Activated naive CD4-positive, alpha-beta T cell treated with anti-CD3 and anti-CD28 coated beads for 36 hours (primary cell): ENCODE measurements at regions of chr5 and their contacts with region 1.

Region 1: DNA sequence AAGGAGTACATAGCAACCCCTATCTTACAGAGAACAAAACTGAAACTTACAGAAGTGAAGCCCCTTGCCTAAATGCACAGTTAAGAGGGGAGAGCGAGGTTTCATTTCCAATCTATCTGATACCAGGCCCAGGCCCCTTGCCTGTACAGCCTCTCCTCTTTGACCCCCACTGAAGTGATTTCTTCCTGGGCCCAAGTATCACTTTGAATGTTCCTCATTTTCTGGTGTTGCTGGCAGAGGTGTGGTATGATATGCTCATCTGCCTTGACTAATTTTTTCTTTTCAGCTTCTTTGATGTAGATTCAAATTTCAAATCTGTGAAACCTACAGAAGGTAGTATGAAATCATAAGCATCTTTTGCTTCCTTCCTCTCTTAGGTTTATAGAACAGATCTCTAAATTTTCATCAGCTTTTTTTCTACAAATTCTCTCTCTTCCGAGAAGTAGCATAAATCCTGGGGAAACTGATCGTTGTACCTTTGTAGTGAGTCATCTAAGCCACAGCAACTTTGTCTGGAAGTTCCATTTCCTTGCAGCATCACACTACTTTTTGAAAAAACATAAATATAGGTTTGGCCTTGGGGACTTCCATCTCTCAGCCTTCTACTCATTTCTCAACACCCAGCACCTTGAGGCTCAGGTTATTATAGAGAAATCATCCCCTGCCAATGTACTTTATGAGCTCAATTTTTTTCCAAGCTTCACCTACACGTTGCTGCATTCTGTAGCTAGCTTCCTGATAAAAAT is 402.4 kb upstream of the PTGER4 start:
- DNase-seq: peak; percentile 67
- H3K4me3 Mint-ChIP-seq: no peak overlapping the region
- H3K27ac Mint-ChIP-seq: peak overlapping the region; percentile 95
- H3K4me1 Mint-ChIP-seq: peaks cover 73% of the 10 kb centered on the region
- H3K27me3 Mint-ChIP-seq: no peaks in the 10 kb centered on the region

Region 2: DNA sequence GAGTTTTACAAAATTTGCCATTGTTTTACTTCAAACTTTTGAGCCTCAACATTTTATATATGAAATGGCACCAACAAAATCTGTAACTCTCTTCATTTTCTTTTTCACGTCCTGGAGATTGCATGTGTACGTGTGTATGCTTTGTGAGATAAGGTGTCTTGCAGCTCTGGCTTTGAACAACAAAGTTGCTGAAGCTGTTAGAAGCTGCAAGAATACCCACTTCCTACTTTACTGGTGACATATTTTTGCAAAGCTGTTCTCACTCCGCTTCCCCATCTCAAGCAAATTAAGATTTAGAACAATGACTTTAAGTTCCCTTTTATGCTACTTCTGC is 1099.7 kb before region 1 on chr5:
- CTCF ChIA-PET with region 1: no interaction called
- intact Hi-C with region 1: loop called (anchors 10 kb)
- DNase-seq: no peak
- H3K4me3 Mint-ChIP-seq: peak overlapping the region; percentile 75
- H3K27ac Mint-ChIP-seq: peak overlapping the region; percentile 92
- H3K4me1 Mint-ChIP-seq: peaks cover 95% of the 10 kb centered on the region
- H3K27me3 Mint-ChIP-seq: no peaks in the 10 kb centered on the region

Region 3: GRCh38 chr5:39948867-39949468 is 328.4 kb before region 1 on chr5:
- CTCF ChIA-PET with region 1: interaction called, 3 read pairs
- intact Hi-C with region 1: loop called (anchors 2 kb)
- DNase-seq: peak; percentile 79
- H3K4me3 Mint-ChIP-seq: no peak overlapping the region
- H3K27ac Mint-ChIP-seq: no peak overlapping the region
- H3K4me1 Mint-ChIP-seq: peaks cover 5% of the 10 kb centered on the region
- H3K27me3 Mint-ChIP-seq: no peaks in the 10 kb centered on the region

Region 4: GRCh38 chr5:40258222-40258621 is 19.1 kb before region 1 on chr5:
- CTCF ChIA-PET with region 1: interaction called, 3 read pairs
- intact Hi-C with region 1: loop called (anchors 1 kb)
- DNase-seq: peak; percentile 27
- H3K4me3 Mint-ChIP-seq: no peak overlapping the region
- H3K27ac Mint-ChIP-seq: no peak overlapping the region
- H3K4me1 Mint-ChIP-seq: peaks cover 6% of the 10 kb centered on the region
- H3K27me3 Mint-ChIP-seq: no peaks in the 10 kb centered on the region

Region 5: DNA sequence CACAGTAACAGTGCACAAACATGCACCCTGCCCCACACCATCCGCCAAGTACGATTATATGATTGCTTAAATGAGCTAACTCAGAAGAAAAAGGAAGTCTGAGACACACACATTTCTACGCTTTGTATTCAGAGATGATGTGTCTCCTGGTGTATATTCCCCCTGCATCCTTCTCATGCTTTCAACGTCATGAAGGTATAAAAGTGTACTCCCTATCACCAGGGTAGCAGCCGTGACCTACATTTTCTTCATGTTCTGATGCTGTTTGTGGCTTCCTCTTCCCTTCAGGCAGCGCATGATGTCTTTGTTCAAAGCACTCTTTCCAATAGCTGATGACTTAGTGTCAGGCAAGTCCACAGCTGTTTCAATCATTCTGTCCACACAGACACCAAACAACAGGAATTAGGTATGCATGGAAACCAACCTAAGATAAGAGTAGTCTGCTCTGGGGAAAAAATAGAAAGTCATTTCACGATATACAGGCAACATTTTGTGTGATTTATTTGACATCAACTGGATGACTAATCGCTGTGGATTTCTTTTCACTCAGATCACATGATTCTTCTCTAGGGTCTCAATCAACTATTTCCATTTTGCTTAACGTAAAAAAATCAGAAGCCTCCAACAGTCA is 133.0 kb after region 1 on chr5:
- CTCF ChIA-PET with region 1: interaction called, 5 read pairs
- intact Hi-C with region 1: loop called (anchors 1 kb)
- DNase-seq: peak; percentile 88
- H3K4me3 Mint-ChIP-seq: peak overlapping the region; percentile 58
- H3K27ac Mint-ChIP-seq: peak overlapping the region; percentile 98
- H3K4me1 Mint-ChIP-seq: peaks cover 64% of the 10 kb centered on the region
- H3K27me3 Mint-ChIP-seq: no peaks in the 10 kb centered on the region

Region 6: DNA sequence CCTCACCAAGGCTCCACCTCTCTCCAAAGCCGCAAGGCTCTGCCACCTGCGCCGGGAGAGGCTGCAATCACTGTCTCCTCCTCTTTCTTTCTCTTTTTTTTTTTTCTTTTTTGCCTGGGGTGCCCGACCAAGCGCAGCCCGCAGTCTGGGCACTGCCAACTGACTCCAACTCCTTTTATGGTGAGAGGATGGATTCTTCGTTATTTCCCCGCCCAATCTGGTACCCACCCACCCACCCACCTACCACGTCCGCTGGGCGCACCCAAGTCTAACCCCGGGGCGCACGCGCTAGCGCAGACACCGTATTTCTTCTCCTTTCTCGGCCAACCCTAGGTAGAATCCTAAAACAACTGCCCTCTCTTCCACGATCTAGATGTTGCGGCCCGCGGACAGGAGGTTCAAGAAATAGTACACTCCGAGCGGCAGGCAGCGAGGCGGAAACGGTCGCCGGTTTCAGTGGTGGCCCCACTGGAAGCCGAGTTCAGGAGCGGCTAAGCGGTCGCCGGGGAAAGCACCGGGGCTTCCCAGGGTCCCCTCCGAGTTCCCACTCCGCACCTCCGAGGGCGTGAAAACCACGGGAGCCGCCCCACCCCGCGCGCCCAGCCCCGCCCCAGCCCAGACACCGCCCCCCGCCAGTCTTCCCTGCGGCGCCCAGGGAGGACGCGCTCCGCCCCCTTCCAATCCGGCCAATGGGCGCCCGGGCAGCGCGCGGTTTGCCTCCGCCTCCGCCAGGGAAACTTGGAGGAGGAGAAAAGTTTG is 402.0 kb after region 1 on chr5:
- CTCF ChIA-PET with region 1: interaction called, 4 read pairs
- intact Hi-C with region 1: loop called (anchors 1 kb)
- DNase-seq: peak; percentile 95
- H3K4me3 Mint-ChIP-seq: peak overlapping the region; percentile 89
- H3K27ac Mint-ChIP-seq: peak overlapping the region; percentile 99
- H3K4me1 Mint-ChIP-seq: peaks cover 41% of the 10 kb centered on the region
- H3K27me3 Mint-ChIP-seq: no peaks in the 10 kb centered on the region

Region 7: DNA sequence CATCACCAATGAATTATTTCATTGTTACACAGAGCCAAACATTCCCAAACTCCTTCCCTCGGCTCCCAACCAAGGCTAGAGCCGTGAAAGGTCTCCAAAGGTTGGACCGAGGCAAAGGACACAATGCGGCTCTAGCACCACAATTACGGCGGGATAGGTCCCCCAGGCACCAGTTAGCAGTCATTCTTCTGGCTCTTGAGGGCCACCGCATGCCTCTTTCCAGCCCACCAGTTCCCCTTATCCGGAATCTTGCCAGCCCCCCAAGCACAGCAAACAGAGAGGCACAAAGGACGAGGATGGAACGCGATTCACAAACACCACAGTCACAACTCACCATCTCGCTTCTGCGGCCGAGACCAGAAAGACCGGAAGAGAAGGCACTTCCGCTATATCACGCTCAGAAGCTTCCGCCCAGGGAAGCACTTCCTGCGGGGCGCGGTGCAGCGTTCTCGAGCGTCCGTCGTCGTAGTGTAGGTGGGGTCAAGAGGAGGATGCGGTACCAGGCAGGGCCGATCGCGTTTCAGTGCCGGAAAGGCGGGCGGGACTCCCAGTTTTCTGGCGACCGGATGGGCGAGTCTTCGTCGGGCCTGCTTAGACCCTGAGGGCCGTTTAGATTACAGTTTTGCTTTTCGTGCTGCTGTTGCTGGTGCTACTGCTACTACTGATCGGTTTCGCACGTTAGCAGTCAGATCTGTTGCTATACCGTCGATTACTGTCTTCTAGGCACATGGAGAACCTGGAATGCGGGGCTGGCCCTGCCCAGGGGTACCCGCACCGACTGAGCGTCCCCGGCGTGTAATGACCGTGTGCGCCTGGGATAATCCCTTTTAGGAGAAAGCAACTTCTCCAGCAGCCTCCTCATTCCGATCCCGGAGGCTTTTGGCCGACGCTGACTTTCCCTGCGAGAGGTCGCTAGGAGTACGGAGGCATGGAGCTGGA is 557.8 kb after region 1 on chr5 and contains the start of gene RPL37:
- CTCF ChIA-PET with region 1: no interaction called
- intact Hi-C with region 1: loop called (anchors 2 kb)
- DNase-seq: peak; percentile 96
- H3K4me3 Mint-ChIP-seq: peak within 1 kb of the TSS; percentile 100
- H3K27ac Mint-ChIP-seq: peak within 1 kb of the TSS; percentile 100
- H3K4me1 Mint-ChIP-seq: peaks cover 48% of the 10 kb centered on the region
- H3K27me3 Mint-ChIP-seq: no peaks in the 10 kb centered on the region
- total RNA-seq, gene RPL37: 2,148 to 2,239 TPM